ENCODE measurements at regions of chr4 and their contacts with region 1.

Region 1: GRCh38 chr4:38654273-38654672 is 9.7 kb upstream of the KLF3 start:
- DNase-seq: peak in 32 of 35 experiments; percentile 41 to 84 (median 62)
- ATAC-seq: peak; percentile 77 to 93 (median 90)
- H3K4me3 ChIP-seq: peak overlapping the region; percentile 31 to 47
- H3K4me3 Mint-ChIP-seq: peak overlapping the region; percentile 73 to 82 (median 81)
- H3K27ac ChIP-seq: peak overlapping the region; percentile 98
- H3K27ac Mint-ChIP-seq: peak overlapping the region; percentile 97 to 98
- H3K4me1 ChIP-seq: peaks cover 28 to 34% of the 10 kb centered on the region in 2 experiments
- H3K4me1 Mint-ChIP-seq: peaks cover 59 to 68% (median 67%) of the 10 kb centered on the region in 3 donors
- H3K27me3 ChIP-seq: no peaks in the 10 kb centered on the region
- H3K27me3 Mint-ChIP-seq: no peaks in the 10 kb centered on the region

Region 2: GRCh38 chr4:38160487-38161207 is 493.6 kb before region 1 on chr4:
- CTCF ChIA-PET with region 1: no interaction called
- POLR2A ChIA-PET with region 1: interaction called in 1 of 2 experiments, 11 read pairs
- DNase-seq: peak in 22 of 35 experiments; percentile 3 to 73 (median 23)
- ATAC-seq: peak; percentile 74 to 93 (median 82)
- H3K4me3 ChIP-seq: no peak overlapping the region
- H3K4me3 Mint-ChIP-seq: no peak overlapping the region
- H3K27ac ChIP-seq: peak overlapping the region; percentile 46
- H3K27ac Mint-ChIP-seq: peak overlapping the region; percentile 30 to 54
- H3K4me1 ChIP-seq: peaks cover 3 to 16% of the 10 kb centered on the region in 2 experiments
- H3K4me1 Mint-ChIP-seq: peaks cover 50 to 67% (median 59%) of the 10 kb centered on the region in 3 donors
- H3K27me3 ChIP-seq: no peaks in the 10 kb centered on the region
- H3K27me3 Mint-ChIP-seq: no peaks in the 10 kb centered on the region

Region 3: GRCh38 chr4:38319456-38320342 is 334.6 kb before region 1 on chr4:
- CTCF ChIA-PET with region 1: interaction called, 3 to 14 read pairs
- POLR2A ChIA-PET with region 1: interaction called, 4 read pairs
- DNase-seq: peak; percentile 60 to 97 (median 84)
- ATAC-seq: peak; percentile 73 to 86 (median 79)
- H3K4me3 ChIP-seq: peak overlapping the region; percentile 50 to 65
- H3K4me3 Mint-ChIP-seq: peak overlapping the region; percentile 71 to 83 (median 79)
- H3K27ac ChIP-seq: peak overlapping the region; percentile 69
- H3K27ac Mint-ChIP-seq: peak overlapping the region; percentile 95
- H3K4me1 ChIP-seq: peaks cover 26 to 34% of the 10 kb centered on the region in 2 experiments
- H3K4me1 Mint-ChIP-seq: peaks cover 45 to 74% (median 57%) of the 10 kb centered on the region in 3 donors
- H3K27me3 ChIP-seq: no peaks in the 10 kb centered on the region
- H3K27me3 Mint-ChIP-seq: no peaks in the 10 kb centered on the region

Region 4: GRCh38 chr4:38620790-38621684 is 33.2 kb before region 1 on chr4:
- CTCF ChIA-PET with region 1: interaction called in 1 of 2 experiments, 15 read pairs
- POLR2A ChIA-PET with region 1: interaction called in 1 of 2 experiments, 6 read pairs
- DNase-seq: peak in 1 of 35 experiments; percentile 9
- ATAC-seq: no peak
- H3K4me3 ChIP-seq: no peak overlapping the region
- H3K4me3 Mint-ChIP-seq: no peak overlapping the region
- H3K27ac ChIP-seq: no peak overlapping the region
- H3K27ac Mint-ChIP-seq: no peak overlapping the region
- H3K4me1 ChIP-seq: peaks cover 5 to 6% of the 10 kb centered on the region in 2 experiments
- H3K4me1 Mint-ChIP-seq: peaks cover 14 to 22% (median 16%) of the 10 kb centered on the region in 3 donors
- H3K27me3 ChIP-seq: peaks cover 0 to 2% of the 10 kb centered on the region in 2 experiments
- H3K27me3 Mint-ChIP-seq: no peaks in the 10 kb centered on the region

Region 5: GRCh38 chr4:38675146-38676121 is 21.2 kb after region 1 on chr4:
- CTCF ChIA-PET with region 1: interaction called, 7 to 16 read pairs
- POLR2A ChIA-PET with region 1: interaction called, 9 to 10 read pairs
- DNase-seq: peak; percentile 55 to 94 (median 78)
- ATAC-seq: peak; percentile 51 to 65 (median 58)
- H3K4me3 ChIP-seq: no peak overlapping the region
- H3K4me3 Mint-ChIP-seq: peak overlapping the region; percentile 70 to 97 (median 82)
- H3K27ac ChIP-seq: peak overlapping the region; percentile 72
- H3K27ac Mint-ChIP-seq: peak overlapping the region; percentile 94 to 96
- H3K4me1 ChIP-seq: peaks cover 60 to 72% of the 10 kb centered on the region in 2 experiments
- H3K4me1 Mint-ChIP-seq: peaks cover 87 to 98% (median 94%) of the 10 kb centered on the region in 3 donors
- H3K27me3 ChIP-seq: no peaks in the 10 kb centered on the region
- H3K27me3 Mint-ChIP-seq: no peaks in the 10 kb centered on the region

Measured in T-cell (primary cell).